ENCODE measurements at regions of chr1 and their contacts with region 1.

Region 1: DNA sequence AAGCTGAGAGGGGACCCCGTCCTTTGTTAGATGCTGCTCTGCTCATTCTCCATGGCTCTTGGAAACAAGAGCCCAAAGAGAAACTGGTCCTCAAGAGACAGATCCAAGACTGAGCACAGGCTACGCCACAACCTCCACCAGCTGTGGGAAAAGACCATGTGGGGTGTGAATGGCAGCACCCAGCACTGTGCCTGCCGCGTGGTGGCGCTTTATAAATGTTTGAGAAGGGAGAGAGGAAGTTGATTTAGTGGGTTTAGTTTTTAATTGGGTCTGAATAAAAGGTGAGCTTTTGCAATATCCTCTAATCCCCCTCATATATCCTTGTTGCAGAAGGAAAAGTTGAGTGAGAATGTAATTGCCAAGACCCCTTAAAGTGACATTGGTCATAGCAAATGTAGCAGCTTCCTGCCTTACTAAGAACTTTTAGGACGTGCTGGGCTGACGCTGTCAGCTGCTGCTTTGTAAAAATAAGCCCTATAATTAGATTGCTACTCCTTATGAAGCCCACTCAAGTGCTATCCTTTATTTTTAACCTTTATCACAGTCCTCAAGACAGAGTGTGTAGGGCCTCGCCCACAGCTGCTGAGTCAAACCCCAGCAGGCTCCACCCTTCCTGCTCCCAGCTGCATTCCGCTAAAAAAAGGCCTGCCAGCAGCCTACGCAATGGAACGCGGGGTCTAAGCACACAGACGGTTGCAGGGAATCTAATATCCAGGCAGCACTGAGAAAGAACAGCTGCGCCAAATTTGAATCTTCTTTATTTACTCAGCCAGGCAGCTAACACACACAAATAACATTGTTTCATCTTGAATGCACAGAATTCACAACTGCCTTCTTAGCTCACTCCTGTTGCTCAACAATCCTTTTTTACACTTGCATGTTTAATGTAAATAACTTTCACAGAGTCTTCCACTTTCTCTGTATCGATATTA is 47.4 kb upstream of the PRDX6 start:
- DNase-seq: peak; percentile 44 to 78 (median 58)
- ATAC-seq: peak; percentile 85
- H3K4me3 ChIP-seq: peak overlapping the region; percentile 16
- H3K4me3 Mint-ChIP-seq: peak overlapping the region; percentile 38
- H3K27ac ChIP-seq: no peak overlapping the region
- H3K27ac Mint-ChIP-seq: peak overlapping the region; percentile 6
- H3K4me1 ChIP-seq: peaks cover 13% of the 10 kb centered on the region
- H3K4me1 Mint-ChIP-seq: peaks cover 23% of the 10 kb centered on the region
- H3K27me3 ChIP-seq: no peaks in the 10 kb centered on the region
- H3K27me3 Mint-ChIP-seq: no peaks in the 10 kb centered on the region
- CTCF ChIP-seq: peak; percentile 71

Region 2: GRCh38 chr1:172826096-172826743 is 603.5 kb before region 1 on chr1:
- CTCF ChIA-PET with region 1: no interaction called
- POLR2A ChIA-PET with region 1: no interaction called
- intact Hi-C with region 1: loop called in 1 of 2 experiments (anchors 10 kb)
- DNase-seq: peak in 3 of 14 experiments; percentile 29 to 35 (median 34)
- ATAC-seq: no peak
- H3K4me3 ChIP-seq: no peak overlapping the region
- H3K4me3 Mint-ChIP-seq: no peak overlapping the region
- H3K27ac ChIP-seq: no peak overlapping the region
- H3K27ac Mint-ChIP-seq: no peak overlapping the region
- H3K4me1 ChIP-seq: no peaks in the 10 kb centered on the region
- H3K4me1 Mint-ChIP-seq: no peaks in the 10 kb centered on the region
- H3K27me3 ChIP-seq: no peaks in the 10 kb centered on the region
- H3K27me3 Mint-ChIP-seq: no peaks in the 10 kb centered on the region
- CTCF ChIP-seq: peak; percentile 63

Region 3: DNA sequence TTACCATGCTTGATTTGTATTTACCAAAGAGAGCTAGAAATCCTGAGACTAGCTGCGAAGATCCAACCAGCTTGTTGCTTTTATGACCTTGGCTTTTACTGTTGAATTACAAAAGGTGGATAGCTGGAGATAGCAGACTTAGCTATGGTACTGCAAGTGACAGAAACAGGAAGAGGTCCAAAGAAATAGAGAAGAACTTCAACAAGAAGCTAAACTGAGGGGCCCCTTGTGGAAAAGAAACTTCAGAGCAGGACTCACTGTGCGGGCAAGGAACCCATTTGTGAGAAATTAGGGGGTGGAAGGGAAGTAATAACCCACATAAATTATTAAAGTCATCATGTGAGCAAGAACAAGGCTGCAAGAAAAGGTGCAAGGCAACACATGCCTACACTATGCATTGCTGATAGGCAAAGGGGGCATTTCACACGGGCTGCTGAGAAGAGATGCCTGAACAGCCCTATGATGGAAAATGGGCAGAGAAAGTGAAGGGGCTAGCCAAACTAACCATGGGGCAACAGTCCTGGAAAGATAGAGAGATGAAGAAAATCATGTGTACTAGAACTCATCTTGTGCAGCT is 69.2 kb before region 1 on chr1:
- CTCF ChIA-PET with region 1: no interaction called
- POLR2A ChIA-PET with region 1: no interaction called
- intact Hi-C with region 1: no loop called
- DNase-seq: peak in 1 of 14 experiments; percentile 1
- ATAC-seq: no peak
- H3K4me3 ChIP-seq: no peak overlapping the region
- H3K4me3 Mint-ChIP-seq: no peak overlapping the region
- H3K27ac ChIP-seq: no peak overlapping the region
- H3K27ac Mint-ChIP-seq: no peak overlapping the region
- H3K4me1 ChIP-seq: peaks cover 2% of the 10 kb centered on the region
- H3K4me1 Mint-ChIP-seq: peaks cover 28% of the 10 kb centered on the region
- H3K27me3 ChIP-seq: no peaks in the 10 kb centered on the region
- H3K27me3 Mint-ChIP-seq: no peaks in the 10 kb centered on the region
- CTCF ChIP-seq: no peak

Region 4: GRCh38 chr1:173628888-173629287 is 199.2 kb after region 1 on chr1:
- CTCF ChIA-PET with region 1: no interaction called
- POLR2A ChIA-PET with region 1: no interaction called
- intact Hi-C with region 1: loop called in 1 of 2 experiments (anchors 5 kb)
- DNase-seq: peak in 2 of 14 experiments; percentile 7 to 28
- ATAC-seq: no peak
- H3K4me3 ChIP-seq: no peak overlapping the region
- H3K4me3 Mint-ChIP-seq: no peak overlapping the region
- H3K27ac ChIP-seq: no peak overlapping the region
- H3K27ac Mint-ChIP-seq: no peak overlapping the region
- H3K4me1 ChIP-seq: no peaks in the 10 kb centered on the region
- H3K4me1 Mint-ChIP-seq: no peaks in the 10 kb centered on the region
- H3K27me3 ChIP-seq: no peaks in the 10 kb centered on the region
- H3K27me3 Mint-ChIP-seq: peaks cover 8% of the 10 kb centered on the region
- CTCF ChIP-seq: no peak

Region 5: GRCh38 chr1:173648880-173649605 is 219.3 kb after region 1 on chr1:
- CTCF ChIA-PET with region 1: no interaction called
- POLR2A ChIA-PET with region 1: no interaction called
- intact Hi-C with region 1: no loop called
- DNase-seq: no peak
- ATAC-seq: no peak
- H3K4me3 ChIP-seq: no peak overlapping the region
- H3K4me3 Mint-ChIP-seq: no peak overlapping the region
- H3K27ac ChIP-seq: no peak overlapping the region
- H3K27ac Mint-ChIP-seq: no peak overlapping the region
- H3K4me1 ChIP-seq: no peaks in the 10 kb centered on the region
- H3K4me1 Mint-ChIP-seq: no peaks in the 10 kb centered on the region
- H3K27me3 ChIP-seq: no peaks in the 10 kb centered on the region
- H3K27me3 Mint-ChIP-seq: no peaks in the 10 kb centered on the region
- CTCF ChIP-seq: no peak

Region 6: GRCh38 chr1:173946380-173946921 is 516.7 kb after region 1 on chr1:
- CTCF ChIA-PET with region 1: no interaction called
- POLR2A ChIA-PET with region 1: no interaction called
- intact Hi-C with region 1: loop called in 1 of 2 experiments (anchors 10 kb)
- DNase-seq: no peak
- ATAC-seq: no peak
- H3K4me3 ChIP-seq: no peak overlapping the region
- H3K4me3 Mint-ChIP-seq: no peak overlapping the region
- H3K27ac ChIP-seq: no peak overlapping the region
- H3K27ac Mint-ChIP-seq: peak overlapping the region; percentile 53
- H3K4me1 ChIP-seq: no peaks in the 10 kb centered on the region
- H3K4me1 Mint-ChIP-seq: no peaks in the 10 kb centered on the region
- H3K27me3 ChIP-seq: no peaks in the 10 kb centered on the region
- H3K27me3 Mint-ChIP-seq: no peaks in the 10 kb centered on the region
- CTCF ChIP-seq: no peak

Region 7: DNA sequence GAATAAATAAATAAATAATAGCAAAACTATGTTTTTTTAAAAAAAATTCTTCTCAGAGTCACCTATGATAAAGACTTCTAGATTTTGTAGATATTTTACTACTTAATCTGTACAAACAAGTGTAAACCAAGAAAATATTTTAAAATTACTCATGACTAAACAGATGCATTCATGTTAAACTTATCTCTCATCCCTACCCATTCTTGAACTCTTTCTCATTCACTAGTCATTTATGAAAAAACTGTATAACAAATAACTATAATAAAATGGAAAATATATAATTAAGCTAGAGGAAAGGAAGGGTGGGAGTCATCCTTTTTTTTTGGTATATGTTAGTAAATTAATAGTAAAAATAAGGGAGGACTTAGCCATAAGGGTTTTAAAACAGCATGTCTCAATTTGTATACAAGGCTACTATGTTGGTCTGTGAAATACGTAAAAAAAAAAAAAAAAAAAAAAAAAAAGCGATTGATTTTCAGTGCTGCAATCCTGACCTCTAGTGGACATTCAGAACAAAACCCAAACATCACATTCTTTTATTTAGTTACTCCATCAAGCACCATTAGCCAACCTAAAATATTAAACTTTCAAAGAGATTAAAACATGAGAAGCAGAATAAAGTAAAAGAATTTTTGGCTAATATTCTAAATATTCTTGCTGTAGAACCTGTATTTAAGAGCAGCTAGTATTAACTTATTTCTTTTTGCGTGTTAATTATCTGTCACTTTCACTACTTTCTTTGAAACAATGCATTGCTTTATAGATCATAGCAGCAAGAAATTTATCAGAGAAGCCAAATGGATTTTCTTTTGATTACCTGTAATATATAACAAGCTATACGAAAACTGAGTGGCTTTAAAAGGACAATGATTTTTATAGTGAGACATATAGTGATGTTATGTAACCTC is 1314.2 kb after region 1 on chr1:
- CTCF ChIA-PET with region 1: no interaction called
- POLR2A ChIA-PET with region 1: no interaction called
- intact Hi-C with region 1: loop called (anchors 5 to 10 kb)
- DNase-seq: peak in 3 of 14 experiments; percentile 56 to 72 (median 71)
- ATAC-seq: peak; percentile 44
- H3K4me3 ChIP-seq: no peak overlapping the region
- H3K4me3 Mint-ChIP-seq: no peak overlapping the region
- H3K27ac ChIP-seq: no peak overlapping the region
- H3K27ac Mint-ChIP-seq: no peak overlapping the region
- H3K4me1 ChIP-seq: peaks cover 3% of the 10 kb centered on the region
- H3K4me1 Mint-ChIP-seq: peaks cover 9% of the 10 kb centered on the region
- H3K27me3 ChIP-seq: no peaks in the 10 kb centered on the region
- H3K27me3 Mint-ChIP-seq: no peaks in the 10 kb centered on the region
- CTCF ChIP-seq: peak; percentile 87